CD4-positive, alpha-beta T cell (primary cell): ENCODE measurements at regions of chr18 and their contacts with region 1.

Region 1: GRCh38 chr18:22609642-22610041 is 191.9 kb upstream of the CTAGE1 start:
- DNase-seq: no peak
- ATAC-seq: no peak
- H3K4me3 ChIP-seq: no peak overlapping the region
- H3K4me3 Mint-ChIP-seq: no peak overlapping the region
- H3K27ac ChIP-seq: no peak overlapping the region
- H3K27ac Mint-ChIP-seq: no peak overlapping the region
- H3K4me1 ChIP-seq: no peaks in the 10 kb centered on the region
- H3K4me1 Mint-ChIP-seq: no peaks in the 10 kb centered on the region
- H3K27me3 ChIP-seq: no peaks in the 10 kb centered on the region
- H3K27me3 Mint-ChIP-seq: peaks cover 9% of the 10 kb centered on the region
- CTCF ChIP-seq: no peak

Region 2: DNA sequence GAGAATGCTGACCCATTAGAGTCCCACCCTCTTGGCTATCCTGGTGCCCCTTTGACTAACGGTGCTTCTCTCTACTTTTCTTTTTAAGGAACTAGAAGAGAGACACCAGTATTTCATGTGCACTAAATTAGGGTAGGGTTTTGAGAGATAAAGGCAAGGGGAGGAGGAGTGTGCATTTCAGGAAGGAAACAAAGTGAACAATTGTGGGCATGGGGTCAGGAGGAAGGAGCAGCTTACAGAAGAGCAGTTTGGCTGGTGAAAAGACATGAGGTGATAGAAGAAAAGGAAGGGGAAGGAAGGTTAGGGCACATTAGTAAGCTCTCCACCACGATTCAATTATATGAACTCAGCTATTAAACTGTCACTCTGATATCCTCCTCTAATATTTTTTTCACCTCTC is 86.2 kb before region 1 on chr18:
- CTCF ChIA-PET with region 1: no interaction called
- POLR2A ChIA-PET with region 1: no interaction called
- intact Hi-C with region 1: no loop called
- DNase-seq: no peak
- ATAC-seq: no peak
- H3K4me3 ChIP-seq: no peak overlapping the region
- H3K4me3 Mint-ChIP-seq: no peak overlapping the region
- H3K27ac ChIP-seq: no peak overlapping the region
- H3K27ac Mint-ChIP-seq: no peak overlapping the region
- H3K4me1 ChIP-seq: no peaks in the 10 kb centered on the region
- H3K4me1 Mint-ChIP-seq: no peaks in the 10 kb centered on the region
- H3K27me3 ChIP-seq: no peaks in the 10 kb centered on the region
- H3K27me3 Mint-ChIP-seq: no peaks in the 10 kb centered on the region
- CTCF ChIP-seq: no peak

Region 3: DNA sequence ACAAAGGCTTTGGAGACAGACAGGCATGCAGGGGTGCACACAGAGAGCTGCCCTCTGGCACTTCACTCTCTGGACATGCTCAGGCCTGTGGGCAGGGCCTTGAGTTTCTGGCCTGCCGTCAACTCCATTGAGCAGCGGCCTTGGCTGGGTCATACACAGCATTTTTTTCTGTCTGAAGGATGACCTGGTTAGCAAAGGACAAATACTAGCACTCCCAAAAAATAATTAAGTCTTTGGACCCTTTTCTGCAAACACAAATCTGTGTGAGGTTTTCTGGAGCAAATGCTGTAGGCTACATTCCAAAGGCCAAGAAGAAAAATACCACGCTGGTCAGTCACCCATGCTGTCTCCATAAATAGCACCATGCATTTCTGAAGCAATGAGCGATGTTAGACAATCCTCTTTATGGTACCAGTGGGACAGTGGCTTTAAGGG is 67.2 kb before region 1 on chr18:
- CTCF ChIA-PET with region 1: no interaction called
- POLR2A ChIA-PET with region 1: no interaction called
- intact Hi-C with region 1: loop called in 1 of 2 experiments (anchors 10 kb)
- DNase-seq: no peak
- ATAC-seq: no peak
- H3K4me3 ChIP-seq: no peak overlapping the region
- H3K4me3 Mint-ChIP-seq: no peak overlapping the region
- H3K27ac ChIP-seq: no peak overlapping the region
- H3K27ac Mint-ChIP-seq: no peak overlapping the region
- H3K4me1 ChIP-seq: no peaks in the 10 kb centered on the region
- H3K4me1 Mint-ChIP-seq: no peaks in the 10 kb centered on the region
- H3K27me3 ChIP-seq: no peaks in the 10 kb centered on the region
- H3K27me3 Mint-ChIP-seq: no peaks in the 10 kb centered on the region
- CTCF ChIP-seq: no peak

Region 4: GRCh38 chr18:22585821-22586220 is 23.8 kb before region 1 on chr18:
- CTCF ChIA-PET with region 1: no interaction called
- POLR2A ChIA-PET with region 1: no interaction called
- intact Hi-C with region 1: no loop called
- DNase-seq: no peak
- ATAC-seq: no peak
- H3K4me3 ChIP-seq: no peak overlapping the region
- H3K4me3 Mint-ChIP-seq: no peak overlapping the region
- H3K27ac ChIP-seq: no peak overlapping the region
- H3K27ac Mint-ChIP-seq: no peak overlapping the region
- H3K4me1 ChIP-seq: no peaks in the 10 kb centered on the region
- H3K4me1 Mint-ChIP-seq: no peaks in the 10 kb centered on the region
- H3K27me3 ChIP-seq: peaks cover 0 to 2% of the 10 kb centered on the region in 2 experiments
- H3K27me3 Mint-ChIP-seq: no peaks in the 10 kb centered on the region
- CTCF ChIP-seq: no peak